Activated CD4-positive, alpha-beta memory T cell treated with anti-CD3 and anti-CD28 coated beads for 36 hours (primary cell): ENCODE measurements at regions of chr13 and their contacts with region 1.

Region 1: DNA sequence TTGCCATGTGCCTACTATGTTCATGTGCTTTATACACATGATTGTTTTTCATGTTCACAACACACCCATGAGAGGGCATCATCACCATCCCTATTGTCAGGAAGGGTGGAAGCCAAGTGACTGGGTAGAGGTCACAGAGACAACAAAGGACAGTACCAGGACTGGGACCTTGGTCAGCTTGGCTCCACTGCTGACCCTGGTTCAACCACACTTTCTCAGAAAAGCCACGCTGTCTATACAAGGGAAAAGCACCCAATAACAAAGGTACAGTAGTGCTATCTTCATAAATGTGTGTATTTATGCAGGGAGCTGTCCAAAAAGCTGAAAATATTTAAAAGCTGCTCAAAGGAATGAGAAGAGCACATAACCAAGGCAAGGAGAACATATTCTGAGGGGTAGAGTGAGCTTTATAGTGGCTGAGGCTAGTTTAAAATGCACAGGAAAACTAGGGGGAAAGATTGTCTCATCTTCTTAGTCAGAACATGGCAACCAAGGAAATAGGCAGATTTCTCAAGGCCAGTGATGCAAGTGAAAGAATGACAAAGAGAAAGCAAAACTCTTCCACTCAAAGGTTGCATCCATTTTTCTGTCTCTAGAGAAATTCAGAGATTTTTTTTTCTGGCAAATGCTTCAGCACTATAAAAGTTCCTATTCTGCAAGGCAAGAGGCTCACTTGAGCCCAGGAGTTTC is 415.0 kb downstream of the FOXO1 start:
- DNase-seq: peak; percentile 13
- H3K4me3 Mint-ChIP-seq: no peak overlapping the region
- H3K27ac Mint-ChIP-seq: peak overlapping the region; percentile 70
- H3K4me1 Mint-ChIP-seq: peaks cover 42% of the 10 kb centered on the region
- H3K27me3 Mint-ChIP-seq: no peaks in the 10 kb centered on the region

Region 2: DNA sequence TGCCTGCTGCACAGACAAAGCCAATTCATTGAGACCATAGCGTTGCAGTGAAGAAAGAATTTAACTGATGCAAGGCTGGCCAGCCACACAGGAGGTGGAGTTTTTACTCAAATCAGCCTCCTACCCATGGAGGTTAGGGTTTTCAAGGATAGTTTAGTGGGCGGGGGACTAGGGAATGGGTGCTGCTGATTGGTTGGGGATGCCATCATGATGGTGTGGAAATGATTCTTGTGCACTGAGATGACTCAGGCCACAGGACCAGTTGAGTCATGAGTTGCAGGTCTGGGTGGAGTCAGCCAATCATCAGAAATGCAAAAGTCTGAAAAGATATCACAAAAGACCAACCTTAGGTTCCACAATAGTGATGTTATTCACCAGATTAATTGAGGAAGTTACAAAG is 55.3 kb after region 1 on chr13:
- CTCF ChIA-PET with region 1: no interaction called
- POLR2A ChIA-PET with region 1: no interaction called
- intact Hi-C with region 1: loop called (anchors 1 kb)
- DNase-seq: peak; percentile 85
- H3K4me3 Mint-ChIP-seq: peak overlapping the region; percentile 32
- H3K27ac Mint-ChIP-seq: peak overlapping the region; percentile 70
- H3K4me1 Mint-ChIP-seq: peaks cover 24% of the 10 kb centered on the region
- H3K27me3 Mint-ChIP-seq: no peaks in the 10 kb centered on the region